ENCODE measurements at regions of chr10 and their contacts with region 1.

Region 1: DNA sequence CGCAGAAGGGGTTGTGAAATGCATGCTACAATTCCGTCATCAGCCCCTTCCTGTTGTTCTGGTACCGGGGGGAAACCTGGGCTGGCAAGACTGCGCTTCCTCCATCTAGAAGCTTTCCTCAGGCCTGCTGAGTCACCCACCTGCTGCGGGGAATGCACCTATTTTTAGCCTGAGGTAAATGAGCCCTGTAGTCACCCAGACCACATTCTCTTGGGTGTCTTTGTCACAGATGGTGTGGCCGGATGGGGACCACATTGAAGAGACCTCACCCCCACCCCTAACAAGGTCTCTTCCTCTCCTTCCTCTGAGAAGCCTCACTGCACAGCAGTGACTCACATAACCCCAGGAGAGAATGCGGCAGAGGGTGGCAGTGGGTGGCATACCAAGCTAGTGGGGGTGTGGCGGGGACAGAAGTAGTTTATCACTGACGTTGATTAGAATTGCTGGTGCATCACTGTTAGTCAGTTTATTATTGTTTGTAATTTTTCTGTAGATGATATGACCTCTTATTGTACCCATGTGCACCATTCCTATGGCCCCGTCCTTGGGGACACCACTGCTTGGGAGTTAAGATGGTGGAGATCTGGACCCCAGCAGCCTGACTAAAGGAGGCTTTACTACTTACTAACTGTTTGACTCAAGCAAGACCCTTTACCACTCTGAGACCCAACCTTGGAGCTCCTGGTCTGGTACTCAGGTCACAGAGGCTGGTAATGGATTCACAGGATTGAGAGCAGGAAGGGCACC is 83.0 kb upstream of the DUSP5 start:
- DNase-seq: peak; percentile 87
- H3K4me3 Mint-ChIP-seq: peak overlapping the region; percentile 56
- H3K27ac Mint-ChIP-seq: peak overlapping the region; percentile 97
- H3K4me1 Mint-ChIP-seq: peaks cover 74% of the 10 kb centered on the region
- H3K27me3 Mint-ChIP-seq: peaks cover 1% of the 10 kb centered on the region

Region 2: DNA sequence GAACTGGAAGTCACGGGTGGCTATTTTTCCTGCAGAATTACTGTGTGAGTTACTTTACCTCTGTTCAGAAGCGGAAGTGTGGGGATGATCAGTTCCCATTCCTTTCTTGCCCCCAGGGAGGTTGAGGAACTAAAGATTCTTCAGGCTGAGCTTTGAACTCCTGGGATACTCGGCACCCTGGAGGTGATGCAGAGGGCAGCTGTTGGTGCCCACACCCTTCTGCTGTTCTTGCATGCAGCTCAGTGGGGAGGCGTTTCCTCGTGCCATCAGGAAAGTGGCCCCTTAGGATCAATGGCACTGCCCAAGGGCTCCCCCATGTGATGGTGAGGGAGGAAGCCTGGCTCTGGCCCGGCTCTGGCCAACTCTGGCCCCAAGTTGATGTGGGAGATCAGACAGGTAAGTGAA is 252.0 kb before region 1 on chr10:
- intact Hi-C with region 1: loop called (anchors 5 kb)
- DNase-seq: no peak
- H3K4me3 Mint-ChIP-seq: no peak overlapping the region
- H3K27ac Mint-ChIP-seq: no peak overlapping the region
- H3K4me1 Mint-ChIP-seq: peaks cover 29% of the 10 kb centered on the region
- H3K27me3 Mint-ChIP-seq: peaks cover 82% of the 10 kb centered on the region

Region 3: GRCh38 chr10:110311357-110311949 is 103.3 kb before region 1 on chr10:
- intact Hi-C with region 1: loop called (anchors 1 kb)
- DNase-seq: no peak
- H3K4me3 Mint-ChIP-seq: no peak overlapping the region
- H3K27ac Mint-ChIP-seq: no peak overlapping the region
- H3K4me1 Mint-ChIP-seq: peaks cover 51% of the 10 kb centered on the region
- H3K27me3 Mint-ChIP-seq: no peaks in the 10 kb centered on the region

Region 4: DNA sequence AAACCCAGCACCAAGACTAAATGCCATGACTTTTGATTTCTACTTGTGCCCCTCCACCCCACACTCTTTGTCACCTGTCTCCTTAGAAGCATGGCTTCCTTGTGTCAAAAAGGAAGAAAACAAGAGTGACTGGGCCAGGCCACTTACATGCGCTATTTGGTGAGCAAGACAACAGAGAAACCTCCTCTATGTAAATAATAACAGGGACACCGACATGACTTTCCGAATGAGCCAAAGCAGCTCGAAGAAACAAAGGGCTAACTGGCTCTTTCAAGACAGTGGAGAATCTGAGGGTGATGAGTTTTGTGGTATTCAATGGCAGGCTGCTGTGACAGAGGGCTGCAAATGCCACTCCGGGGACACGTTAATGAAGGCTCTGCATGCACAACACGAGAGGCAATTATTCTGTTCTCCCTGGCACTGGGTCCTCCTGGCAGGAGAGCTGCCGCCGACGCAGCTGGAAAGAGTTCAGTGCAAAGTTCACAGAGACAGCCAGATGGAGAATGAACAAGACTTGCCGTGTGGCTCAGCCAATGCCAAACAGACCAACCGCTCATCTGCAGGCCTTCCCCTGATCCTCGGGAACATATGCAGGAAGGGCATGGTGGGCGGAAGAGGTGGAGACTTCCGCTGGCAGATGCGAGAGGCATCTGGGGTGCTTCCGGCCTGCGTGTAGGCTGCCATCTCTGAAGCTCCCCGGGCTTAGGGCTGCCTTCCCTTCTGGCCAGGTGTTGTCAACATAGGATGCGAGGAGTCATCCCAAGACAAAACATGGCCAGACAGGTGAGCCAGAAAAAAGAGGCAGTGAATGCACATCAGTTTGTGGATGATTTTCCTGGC is 50.9 kb before region 1 on chr10:
- intact Hi-C with region 1: loop called (anchors 1 kb)
- DNase-seq: no peak
- H3K4me3 Mint-ChIP-seq: peak overlapping the region; percentile 34
- H3K27ac Mint-ChIP-seq: peak overlapping the region; percentile 83
- H3K4me1 Mint-ChIP-seq: peaks cover 84% of the 10 kb centered on the region
- H3K27me3 Mint-ChIP-seq: no peaks in the 10 kb centered on the region

Region 5: GRCh38 chr10:110376021-110376766 is 38.5 kb before region 1 on chr10:
- intact Hi-C with region 1: no loop called
- DNase-seq: no peak
- H3K4me3 Mint-ChIP-seq: no peak overlapping the region
- H3K27ac Mint-ChIP-seq: no peak overlapping the region
- H3K4me1 Mint-ChIP-seq: peaks cover 42% of the 10 kb centered on the region
- H3K27me3 Mint-ChIP-seq: no peaks in the 10 kb centered on the region

Region 6: DNA sequence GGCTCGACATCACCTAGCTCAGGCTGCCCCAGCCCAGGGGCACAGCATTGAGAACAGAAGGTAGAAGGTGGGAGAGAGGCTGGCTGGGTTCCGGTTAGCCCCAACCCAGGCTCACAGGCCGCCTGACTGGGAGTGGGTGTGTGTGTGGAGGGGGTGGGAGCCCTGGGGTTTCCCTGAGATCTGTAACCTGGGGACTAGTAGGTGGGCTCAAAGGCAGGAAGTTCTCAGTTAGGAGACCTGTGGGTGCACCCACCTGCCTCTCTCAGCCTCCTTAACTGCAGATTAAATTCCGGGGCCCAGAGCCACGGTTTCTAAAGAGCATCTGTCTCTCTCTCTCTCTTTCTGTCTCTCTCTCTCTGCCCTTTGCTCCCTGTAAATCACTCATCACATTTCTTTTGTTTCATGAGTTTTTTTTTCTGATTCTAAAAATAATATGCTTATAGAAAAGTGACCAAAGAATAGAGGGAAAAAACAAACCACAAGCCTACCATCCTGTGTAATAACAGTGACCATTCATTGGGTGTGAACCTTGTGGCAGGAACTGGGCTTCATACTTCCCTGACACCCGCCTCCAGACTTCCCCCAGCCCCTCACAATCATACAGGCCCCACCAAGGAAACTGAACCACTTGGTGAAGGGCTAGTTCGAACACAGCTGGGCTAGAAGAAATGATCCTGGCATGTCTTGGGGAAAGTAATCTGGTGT is 26.6 kb before region 1 on chr10:
- intact Hi-C with region 1: loop called (anchors 1 kb)
- DNase-seq: no peak
- H3K4me3 Mint-ChIP-seq: peak overlapping the region; percentile 49
- H3K27ac Mint-ChIP-seq: peak overlapping the region; percentile 96
- H3K4me1 Mint-ChIP-seq: peaks cover 59% of the 10 kb centered on the region
- H3K27me3 Mint-ChIP-seq: no peaks in the 10 kb centered on the region

Region 7: GRCh38 chr10:110395725-110396651 is 18.7 kb before region 1 on chr10:
- intact Hi-C with region 1: loop called (anchors 1 kb)
- DNase-seq: peak; percentile 67
- H3K4me3 Mint-ChIP-seq: peak overlapping the region; percentile 15
- H3K27ac Mint-ChIP-seq: peak overlapping the region; percentile 77
- H3K4me1 Mint-ChIP-seq: peaks cover 75% of the 10 kb centered on the region
- H3K27me3 Mint-ChIP-seq: no peaks in the 10 kb centered on the region

Region 8: GRCh38 chr10:110528224-110528997 is 113.7 kb after region 1 on chr10:
- intact Hi-C with region 1: loop called (anchors 1 kb)
- DNase-seq: no peak
- H3K4me3 Mint-ChIP-seq: peak overlapping the region; percentile 64
- H3K27ac Mint-ChIP-seq: peak overlapping the region; percentile 94
- H3K4me1 Mint-ChIP-seq: peaks cover 83% of the 10 kb centered on the region
- H3K27me3 Mint-ChIP-seq: no peaks in the 10 kb centered on the region